Naive thymus-derived CD4-positive, alpha-beta T cell (primary cell): ENCODE measurements at regions of chr1 and their contacts with region 1.

Region 1: GRCh38 chr1:226634166-226634588 is 85.6 kb downstream of the STUM start:
- DNase-seq: peak; percentile 69 to 86 (median 79)
- ATAC-seq: peak; percentile 89
- H3K4me3 ChIP-seq: no peak overlapping the region
- H3K4me3 Mint-ChIP-seq: peak overlapping the region; percentile 10 to 90 (median 64)
- H3K27ac ChIP-seq: peak overlapping the region; percentile 54
- H3K27ac Mint-ChIP-seq: peak overlapping the region; percentile 76 to 98 (median 90)
- H3K4me1 ChIP-seq: peaks cover 26 to 48% of the 10 kb centered on the region in 2 donors
- H3K4me1 Mint-ChIP-seq: peaks cover 23 to 75% (median 61%) of the 10 kb centered on the region in 7 donors
- H3K27me3 ChIP-seq: no peaks in the 10 kb centered on the region
- H3K27me3 Mint-ChIP-seq: no peaks in the 10 kb centered on the region

Region 2: GRCh38 chr1:226649780-226650179 is 15.6 kb after region 1 on chr1:
- CTCF ChIA-PET with region 1: interaction called, 13 read pairs
- POLR2A ChIA-PET with region 1: interaction called, 9 read pairs
- intact Hi-C with region 1: loop called in 1 of 2 experiments (anchors 2 kb)
- DNase-seq: peak in 6 of 9 donors; percentile 48 to 58 (median 54)
- ATAC-seq: no peak
- H3K4me3 ChIP-seq: no peak overlapping the region
- H3K4me3 Mint-ChIP-seq: peak overlapping the region in 5 of 10 donors; percentile 15 to 50 (median 17)
- H3K27ac ChIP-seq: no peak overlapping the region
- H3K27ac Mint-ChIP-seq: no peak overlapping the region
- H3K4me1 ChIP-seq: peaks cover 23 to 51% of the 10 kb centered on the region in 2 donors
- H3K4me1 Mint-ChIP-seq: peaks cover 0 to 83% (median 63%) of the 10 kb centered on the region in 7 donors
- H3K27me3 ChIP-seq: no peaks in the 10 kb centered on the region
- H3K27me3 Mint-ChIP-seq: no peaks in the 10 kb centered on the region

Region 3: DNA sequence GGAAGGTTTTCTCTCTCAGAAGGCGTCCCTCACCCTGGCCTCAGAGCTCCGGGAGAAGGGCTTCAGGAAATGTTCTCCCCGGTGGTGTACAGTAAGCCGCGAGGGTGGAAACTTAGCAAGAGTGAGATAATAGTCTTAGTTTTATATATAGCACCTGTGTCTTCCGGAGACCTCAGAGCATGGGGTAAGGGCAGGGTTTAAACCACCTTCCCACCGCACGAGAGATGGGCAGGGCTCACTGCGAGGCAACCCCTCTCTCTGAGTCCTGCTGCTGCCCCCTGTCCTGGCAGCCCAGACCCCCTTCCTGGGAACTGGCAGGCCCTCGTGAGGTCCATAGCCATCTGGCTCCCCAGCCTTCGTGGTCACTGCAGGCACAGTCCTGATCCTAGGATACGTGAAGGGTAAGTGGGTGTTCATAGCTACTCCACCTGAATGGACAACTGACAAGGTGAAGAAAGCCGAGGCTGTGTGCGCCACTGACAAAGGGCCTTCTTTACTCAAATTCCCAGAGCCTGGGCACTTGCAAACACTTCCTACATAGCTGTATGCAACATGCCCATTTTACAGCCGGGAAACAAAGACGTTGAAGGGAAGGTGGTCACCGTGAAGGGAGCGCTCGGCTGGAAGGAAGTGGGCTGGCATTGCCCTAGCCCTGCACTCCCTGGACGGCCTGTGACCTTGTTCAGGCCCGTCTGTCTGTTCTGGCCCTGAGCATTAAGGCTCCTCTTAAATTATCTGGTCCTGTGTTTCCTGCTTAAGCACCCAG is 78.0 kb after region 1 on chr1:
- CTCF ChIA-PET with region 1: interaction called, 3 read pairs
- POLR2A ChIA-PET with region 1: no interaction called
- intact Hi-C with region 1: loop called in 1 of 2 experiments (anchors 2 kb)
- DNase-seq: peak in 7 of 9 donors; percentile 52 to 76 (median 61)
- ATAC-seq: peak; percentile 69
- H3K4me3 ChIP-seq: peak overlapping the region; percentile 43
- H3K4me3 Mint-ChIP-seq: peak overlapping the region; percentile 68 to 92 (median 82)
- H3K27ac ChIP-seq: peak overlapping the region; percentile 75
- H3K27ac Mint-ChIP-seq: peak overlapping the region; percentile 79 to 100 (median 95)
- H3K4me1 ChIP-seq: peaks cover 69 to 88% of the 10 kb centered on the region in 2 donors
- H3K4me1 Mint-ChIP-seq: peaks cover 72 to 100% (median 99%) of the 10 kb centered on the region in 7 donors
- H3K27me3 ChIP-seq: no peaks in the 10 kb centered on the region
- H3K27me3 Mint-ChIP-seq: no peaks in the 10 kb centered on the region

Region 4: GRCh38 chr1:226731257-226731893 is 97.2 kb after region 1 on chr1:
- CTCF ChIA-PET with region 1: interaction called, 11 read pairs
- POLR2A ChIA-PET with region 1: interaction called, 18 read pairs
- intact Hi-C with region 1: no loop called
- DNase-seq: peak in 1 of 9 donors; percentile 20
- ATAC-seq: no peak
- H3K4me3 ChIP-seq: peak overlapping the region; percentile 99
- H3K4me3 Mint-ChIP-seq: peak overlapping the region; percentile 86 to 99 (median 92)
- H3K27ac ChIP-seq: peak overlapping the region; percentile 92
- H3K27ac Mint-ChIP-seq: peak overlapping the region; percentile 88 to 97 (median 94)
- H3K4me1 ChIP-seq: peaks cover 39 to 61% of the 10 kb centered on the region in 2 donors
- H3K4me1 Mint-ChIP-seq: peaks cover 54 to 94% (median 67%) of the 10 kb centered on the region in 7 donors
- H3K27me3 ChIP-seq: no peaks in the 10 kb centered on the region
- H3K27me3 Mint-ChIP-seq: no peaks in the 10 kb centered on the region